Upper lobe of right lung (tissue), 1 donor: ENCODE measurements at regions of chr1 and their contacts with region 1.

Region 1: GRCh38 chr1:3727042-3727824 is 25.0 kb upstream of the CCDC27 start:
- DNase-seq: no peak
- ATAC-seq: no peak
- H3K4me3 ChIP-seq: no peak overlapping the region
- H3K27ac ChIP-seq: no peak overlapping the region
- H3K4me1 ChIP-seq: no peaks in the 10 kb centered on the region
- H3K27me3 ChIP-seq: peaks cover 19% of the 10 kb centered on the region
- CTCF ChIP-seq: peak; percentile 18

Region 2: GRCh38 chr1:3453203-3453761 is 274.0 kb before region 1 on chr1:
- intact Hi-C with region 1: loop called (anchors 10 kb)
- DNase-seq: peak; percentile 89
- ATAC-seq: peak; percentile 86
- H3K4me3 ChIP-seq: no peak overlapping the region
- H3K27ac ChIP-seq: no peak overlapping the region
- H3K4me1 ChIP-seq: peaks cover 4% of the 10 kb centered on the region
- H3K27me3 ChIP-seq: peaks cover 24% of the 10 kb centered on the region
- CTCF ChIP-seq: peak; percentile 96

Region 3: GRCh38 chr1:3803905-3804626 is 76.8 kb after region 1 on chr1:
- intact Hi-C with region 1: no loop called
- DNase-seq: no peak
- ATAC-seq: no peak
- H3K4me3 ChIP-seq: no peak overlapping the region
- H3K27ac ChIP-seq: no peak overlapping the region
- H3K4me1 ChIP-seq: no peaks in the 10 kb centered on the region
- H3K27me3 ChIP-seq: no peaks in the 10 kb centered on the region
- CTCF ChIP-seq: no peak